Prostate gland (tissue), 2 donors: ENCODE measurements at regions of chrX and their contacts with region 1.

Region 1: GRCh38 chrX:54044126-54044876 is at the start of gene PHF8:
- DNase-seq: peak; percentile 94
- H3K4me3 ChIP-seq: peak within 1 kb of the TSS; percentile 52 to 58
- H3K27ac ChIP-seq: peak within 1 kb of the TSS; percentile 93 to 94
- H3K4me1 ChIP-seq: no peaks in the 10 kb centered on the region
- H3K27me3 ChIP-seq: no peaks in the 10 kb centered on the region
- CTCF ChIP-seq: no peak
- POLR2A ChIP-seq: peak; percentile 18
- total RNA-seq, gene PHF8: 30.4 to 139 TPM

Region 2: DNA sequence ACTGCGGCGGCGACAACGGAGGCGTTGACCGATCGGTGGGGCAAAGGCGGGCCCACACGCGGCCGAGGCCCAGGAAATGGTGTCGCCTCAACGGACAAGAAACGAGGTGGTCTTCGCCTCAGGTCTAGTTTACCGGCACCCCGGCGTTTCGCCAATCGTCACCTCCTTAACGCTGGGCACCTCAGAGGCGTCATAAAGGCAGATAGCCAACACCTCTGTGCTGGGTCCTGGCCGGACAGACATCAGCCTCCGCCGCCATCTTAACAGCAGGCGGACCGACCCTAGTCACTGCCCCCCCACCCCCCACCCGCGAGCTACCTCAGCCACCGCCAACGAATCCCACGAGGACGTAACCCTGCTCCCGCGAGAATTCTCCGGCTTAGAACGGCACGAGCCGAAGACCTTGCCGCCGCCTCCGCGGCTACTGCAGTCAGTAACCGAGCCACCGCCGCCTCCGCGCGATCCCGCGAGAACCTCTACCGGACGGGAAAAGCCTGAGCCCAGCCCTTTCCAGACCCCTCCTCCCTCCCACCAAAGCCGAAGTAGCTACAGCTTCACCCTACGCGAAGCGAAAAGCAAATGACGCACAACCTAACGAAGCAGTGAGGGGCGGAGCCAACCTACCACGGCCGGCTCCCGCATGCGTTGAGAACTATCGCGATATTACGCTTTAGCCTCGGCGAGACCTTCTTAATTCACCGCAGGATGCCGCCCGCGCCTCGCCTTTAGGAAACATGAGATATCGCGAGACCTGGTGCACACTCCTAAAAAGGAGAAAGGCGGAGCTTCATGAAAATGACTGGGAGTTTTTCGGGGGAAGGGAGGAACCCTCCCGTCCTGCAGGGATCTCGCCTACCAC is 360.5 kb before region 1 on chrX:
- intact Hi-C with region 1: loop called (anchors 10 kb)
- DNase-seq: peak; percentile 94
- H3K4me3 ChIP-seq: peak overlapping the region; percentile 48 to 49
- H3K27ac ChIP-seq: peak overlapping the region; percentile 85 to 89
- H3K4me1 ChIP-seq: no peaks in the 10 kb centered on the region
- H3K27me3 ChIP-seq: no peaks in the 10 kb centered on the region
- CTCF ChIP-seq: peak in 2 of 4 experiments; percentile 14 to 41
- POLR2A ChIP-seq: peak; percentile 71

Region 3: DNA sequence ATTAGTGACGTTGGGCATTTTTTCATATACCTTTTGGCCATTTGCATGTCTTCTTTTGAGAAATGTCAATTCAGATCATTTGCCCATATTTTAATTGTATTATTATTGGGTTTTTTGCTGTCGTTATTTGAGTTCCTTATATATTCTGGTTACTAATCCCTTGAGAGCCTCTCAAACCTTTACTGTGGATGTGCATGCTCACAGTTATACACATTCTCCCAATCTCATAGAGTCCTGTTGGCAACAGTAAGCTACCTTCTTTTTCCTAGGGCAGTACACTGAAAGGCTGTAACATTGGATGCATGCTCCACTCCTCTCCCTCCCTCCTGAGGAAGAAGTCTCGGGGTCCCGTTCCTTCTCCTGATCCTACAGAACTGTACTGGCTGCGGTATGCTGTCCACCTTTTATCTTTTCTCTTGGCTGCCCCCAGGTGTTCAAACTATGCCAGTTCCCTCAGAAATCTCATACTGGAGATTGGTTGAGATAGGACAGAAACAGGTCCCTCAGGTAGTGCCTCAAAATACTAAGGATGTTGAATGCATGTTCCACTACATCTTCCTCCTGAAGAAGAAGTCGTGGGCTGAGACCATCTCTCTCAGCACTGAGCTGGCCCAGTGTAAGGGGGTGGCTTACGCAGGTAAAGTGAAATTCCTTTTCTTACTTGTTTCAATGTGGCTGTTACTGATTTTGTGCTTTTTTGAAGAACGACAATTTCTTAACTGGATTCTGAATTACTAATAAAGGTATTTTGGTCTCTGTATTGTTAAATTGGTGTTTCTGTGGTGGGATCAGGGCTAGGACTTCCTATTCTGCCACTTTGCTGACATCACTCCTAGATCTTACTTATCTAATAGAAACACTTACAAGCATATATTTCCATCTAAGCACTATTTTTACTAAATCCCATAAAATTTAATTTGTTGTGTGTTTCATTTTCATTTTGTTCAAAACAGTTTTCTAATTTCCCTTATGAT is 212.4 kb before region 1 on chrX:
- intact Hi-C with region 1: no loop called
- DNase-seq: peak; percentile 21
- H3K4me3 ChIP-seq: no peak overlapping the region
- H3K27ac ChIP-seq: no peak overlapping the region
- H3K4me1 ChIP-seq: no peaks in the 10 kb centered on the region
- H3K27me3 ChIP-seq: no peaks in the 10 kb centered on the region
- CTCF ChIP-seq: peak in 1 of 4 experiments; percentile 27
- POLR2A ChIP-seq: no peak

Region 4: GRCh38 chrX:54182864-54183608 is 138.7 kb after region 1 on chrX and contains the start of gene FAM120C:
- intact Hi-C with region 1: loop called (anchors 10 kb)
- DNase-seq: peak; percentile 39
- H3K4me3 ChIP-seq: peak within 1 kb of the TSS; percentile 55 to 61
- H3K27ac ChIP-seq: peak within 1 kb of the TSS; percentile 69 to 80
- H3K4me1 ChIP-seq: no peaks in the 10 kb centered on the region
- H3K27me3 ChIP-seq: no peaks in the 10 kb centered on the region
- CTCF ChIP-seq: no peak
- POLR2A ChIP-seq: no peak
- total RNA-seq, gene FAM120C: 10.5 to 14.9 TPM